ENCODE measurements at regions of chr2 and their contacts with region 1.

Region 1: GRCh38 chr2:189327879-189328847 is 113.1 kb upstream of the WDR75 start:
- DNase-seq: no peak

Region 2: GRCh38 chr2:189129971-189130370 is 198.2 kb before region 1 on chr2:
- intact Hi-C with region 1: no loop called
- DNase-seq: no peak

Region 3: DNA sequence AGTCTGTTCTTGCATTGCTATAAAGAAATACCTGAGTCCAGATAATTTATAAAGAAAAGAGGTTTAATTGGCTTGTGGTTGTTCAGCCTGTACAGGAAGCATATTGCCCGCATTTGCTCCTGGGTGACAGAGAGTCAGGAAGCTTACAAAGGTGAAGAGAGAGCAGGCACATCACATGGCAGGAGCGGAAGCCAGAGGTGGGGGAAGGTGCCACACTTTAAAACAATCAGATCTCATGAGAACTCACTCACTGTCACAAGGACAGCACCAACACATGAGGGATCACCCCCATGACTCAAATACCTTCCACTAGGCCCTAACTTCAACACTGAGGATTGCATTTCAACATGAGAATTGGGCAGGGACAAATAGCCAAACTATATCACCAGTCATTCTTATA is 23.8 kb before region 1 on chr2:
- intact Hi-C with region 1: loop called in 1 of 2 experiments (anchors 1 kb)
- DNase-seq: no peak

Region 4: GRCh38 chr2:189440947-189441708 is 113.0 kb after region 1 on chr2 and contains the start of gene WDR75:
- intact Hi-C with region 1: no loop called
- DNase-seq: peak; percentile 97
- total RNA-seq, gene WDR75: 27.3 to 28.3 TPM